ENCODE measurements at regions of chr10 and their contacts with region 1.

Region 1: GRCh38 chr10:70233109-70233938 is at the start of gene PPA1:
- DNase-seq: peak; percentile 98 to 100 (median 99)
- ATAC-seq: peak; percentile 93
- H3K4me3 ChIP-seq: peak within 1 kb of the TSS; percentile 87 to 90
- H3K4me3 Mint-ChIP-seq: peak within 1 kb of the TSS; percentile 89
- H3K27ac ChIP-seq: peak within 1 kb of the TSS; percentile 74 to 80
- H3K27ac Mint-ChIP-seq: peak within 1 kb of the TSS; percentile 93
- H3K4me1 ChIP-seq: peaks cover 9% of the 10 kb centered on the region
- H3K4me1 Mint-ChIP-seq: peaks cover 36% of the 10 kb centered on the region
- H3K27me3 ChIP-seq: no peaks in the 10 kb centered on the region
- H3K27me3 Mint-ChIP-seq: peaks cover 4% of the 10 kb centered on the region
- CTCF ChIP-seq: no peak
- total RNA-seq, gene PPA1: 79.9 to 83.1 TPM

Region 2: GRCh38 chr10:70169649-70170364 is 63.5 kb before region 1 on chr10:
- CTCF ChIA-PET with region 1: no interaction called
- POLR2A ChIA-PET with region 1: interaction called, 5 read pairs
- intact Hi-C with region 1: loop called (anchors 1 kb)
- DNase-seq: peak in 3 of 9 experiments; percentile 28 to 51 (median 29)
- ATAC-seq: peak; percentile 13
- H3K4me3 ChIP-seq: peak overlapping the region; percentile 65 to 90
- H3K4me3 Mint-ChIP-seq: peak overlapping the region; percentile 94
- H3K27ac ChIP-seq: peak overlapping the region; percentile 83 to 94
- H3K27ac Mint-ChIP-seq: peak overlapping the region; percentile 97
- H3K4me1 ChIP-seq: peaks cover 57% of the 10 kb centered on the region
- H3K4me1 Mint-ChIP-seq: peaks cover 60% of the 10 kb centered on the region
- H3K27me3 ChIP-seq: no peaks in the 10 kb centered on the region
- H3K27me3 Mint-ChIP-seq: no peaks in the 10 kb centered on the region
- CTCF ChIP-seq: no peak

Region 3: DNA sequence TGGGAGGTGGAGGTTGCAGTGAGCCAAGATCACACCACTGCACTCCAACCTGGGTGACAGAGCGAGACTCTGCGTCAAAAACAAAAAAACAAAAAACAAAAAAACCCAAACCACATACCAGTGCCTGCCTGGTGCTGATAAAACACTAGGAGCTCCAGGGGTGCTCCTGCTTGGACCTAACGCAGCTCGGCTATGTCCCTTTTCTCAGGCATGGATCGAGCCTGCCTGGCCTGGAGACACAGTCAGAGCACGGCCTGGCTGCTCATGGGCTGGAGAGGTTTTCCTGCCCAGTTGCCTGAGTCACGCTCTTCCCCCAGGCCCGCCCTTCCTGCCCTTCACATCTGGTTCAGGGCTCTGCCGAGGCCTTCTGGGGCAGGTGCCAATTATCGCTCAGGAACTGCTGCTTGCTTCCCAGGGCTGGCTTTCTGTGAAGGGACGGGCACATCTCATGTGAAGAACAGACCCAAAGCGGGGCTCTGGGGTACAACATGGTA is 63.1 kb after region 1 on chr10:
- CTCF ChIA-PET with region 1: no interaction called
- POLR2A ChIA-PET with region 1: no interaction called
- intact Hi-C with region 1: no loop called
- DNase-seq: peak in 1 of 9 experiments; percentile 20
- ATAC-seq: no peak
- H3K4me3 ChIP-seq: no peak overlapping the region
- H3K4me3 Mint-ChIP-seq: no peak overlapping the region
- H3K27ac ChIP-seq: no peak overlapping the region
- H3K27ac Mint-ChIP-seq: no peak overlapping the region
- H3K4me1 ChIP-seq: no peaks in the 10 kb centered on the region
- H3K4me1 Mint-ChIP-seq: peaks cover 4% of the 10 kb centered on the region
- H3K27me3 ChIP-seq: no peaks in the 10 kb centered on the region
- H3K27me3 Mint-ChIP-seq: no peaks in the 10 kb centered on the region
- CTCF ChIP-seq: no peak

Measured in CD8-positive, alpha-beta T cell (primary cell).